Right ventricle myocardium superior (tissue), 1 donor: ENCODE measurements at regions of chr2 and their contacts with region 1.

Region 1: GRCh38 chr2:241315093-241315878 is at the start of gene HDLBP:
- DNase-seq: peak; percentile 100
- ATAC-seq: peak; percentile 93
- total RNA-seq, gene HDLBP: 373 TPM

Region 2: GRCh38 chr2:241354668-241355658 is 39.7 kb after region 1 on chr2:
- intact Hi-C with region 1: loop called (anchors 5 kb)
- DNase-seq: peak; percentile 94
- ATAC-seq: peak; percentile 63